Naive thymus-derived CD4-positive, alpha-beta T cell (primary cell): ENCODE measurements at regions of chr16 and their contacts with region 1.

Region 1: DNA sequence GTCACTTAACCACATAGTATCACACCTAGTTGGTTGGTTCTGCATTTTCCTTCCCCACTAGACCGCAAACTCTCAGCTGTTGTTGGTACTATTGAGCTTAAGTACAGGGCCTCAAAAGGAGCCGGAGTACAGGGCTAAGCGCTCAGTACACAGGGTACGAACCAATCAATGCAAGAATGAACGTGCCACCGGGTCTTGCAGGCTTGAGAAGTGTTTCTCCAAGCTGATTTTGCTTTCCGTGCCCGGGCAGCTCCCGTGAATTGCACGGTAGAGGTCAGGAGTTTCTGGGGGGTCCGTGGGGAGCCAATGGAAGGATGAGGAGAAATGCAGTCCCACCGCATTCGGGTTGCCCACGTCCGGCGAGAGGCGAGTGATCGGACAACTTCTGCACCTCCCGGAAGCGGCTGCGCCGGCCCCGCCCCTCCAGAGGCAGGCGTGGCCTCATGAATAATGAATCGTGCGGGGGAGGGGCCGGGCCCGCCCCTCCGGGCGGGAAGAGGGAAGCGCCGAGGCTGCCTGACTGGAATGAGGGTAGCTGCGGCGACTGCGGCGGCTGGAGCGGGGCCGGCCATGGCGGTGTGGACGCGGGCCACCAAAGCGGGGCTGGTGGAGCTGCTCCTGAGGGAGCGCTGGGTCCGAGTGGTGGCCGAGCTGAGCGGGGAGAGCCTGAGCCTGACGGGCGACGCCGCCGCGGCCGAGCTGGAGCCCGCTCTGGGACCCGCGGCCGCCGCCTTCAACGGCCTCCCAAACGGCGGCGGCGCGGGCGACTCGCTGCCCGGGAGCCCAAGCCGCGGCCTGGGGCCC is at the start of gene SNTB2:
- DNase-seq: peak; percentile 68 to 89 (median 78)
- ATAC-seq: peak; percentile 90
- H3K4me3 ChIP-seq: peak within 1 kb of the TSS; percentile 83
- H3K4me3 Mint-ChIP-seq: peak within 1 kb of the TSS; percentile 88 to 100 (median 99)
- H3K27ac ChIP-seq: peak within 1 kb of the TSS; percentile 77
- H3K27ac Mint-ChIP-seq: peak within 1 kb of the TSS; percentile 89 to 99 (median 96)
- H3K4me1 ChIP-seq: peaks cover 13 to 32% of the 10 kb centered on the region in 2 donors
- H3K4me1 Mint-ChIP-seq: peaks cover 23 to 46% (median 39%) of the 10 kb centered on the region in 7 donors
- H3K27me3 ChIP-seq: no peaks in the 10 kb centered on the region
- H3K27me3 Mint-ChIP-seq: no peaks in the 10 kb centered on the region
- total RNA-seq, gene SNTB2: 9.7 to 16.4 (median 12.1) TPM

Region 2: GRCh38 chr16:68538880-68539701 is 647.8 kb before region 1 on chr16 and contains the start of gene ZFP90:
- CTCF ChIA-PET with region 1: no interaction called
- POLR2A ChIA-PET with region 1: no interaction called
- intact Hi-C with region 1: loop called in 1 of 2 experiments (anchors 2 kb)
- DNase-seq: peak; percentile 82 to 91 (median 88)
- ATAC-seq: peak; percentile 94
- H3K4me3 ChIP-seq: peak within 1 kb of the TSS; percentile 66
- H3K4me3 Mint-ChIP-seq: peak within 1 kb of the TSS; percentile 86 to 99 (median 97)
- H3K27ac ChIP-seq: peak within 1 kb of the TSS; percentile 94
- H3K27ac Mint-ChIP-seq: peak within 1 kb of the TSS; percentile 97 to 100 (median 100)
- H3K4me1 ChIP-seq: peaks cover 13 to 14% of the 10 kb centered on the region in 2 donors
- H3K4me1 Mint-ChIP-seq: peaks cover 13 to 32% (median 24%) of the 10 kb centered on the region in 7 donors
- H3K27me3 ChIP-seq: no peaks in the 10 kb centered on the region
- H3K27me3 Mint-ChIP-seq: no peaks in the 10 kb centered on the region
- total RNA-seq, gene ZFP90: 25.7 to 49.4 (median 38.8) TPM

Region 3: GRCh38 chr16:68951991-68952877 is 234.6 kb before region 1 on chr16:
- CTCF ChIA-PET with region 1: no interaction called
- POLR2A ChIA-PET with region 1: no interaction called
- intact Hi-C with region 1: no loop called
- DNase-seq: no peak
- ATAC-seq: no peak
- H3K4me3 ChIP-seq: no peak overlapping the region
- H3K4me3 Mint-ChIP-seq: no peak overlapping the region
- H3K27ac ChIP-seq: no peak overlapping the region
- H3K27ac Mint-ChIP-seq: no peak overlapping the region
- H3K4me1 ChIP-seq: no peaks in the 10 kb centered on the region
- H3K4me1 Mint-ChIP-seq: peaks cover 0 to 2% (median 0%) of the 10 kb centered on the region in 7 donors
- H3K27me3 ChIP-seq: no peaks in the 10 kb centered on the region
- H3K27me3 Mint-ChIP-seq: no peaks in the 10 kb centered on the region

Region 4: GRCh38 chr16:69132424-69133252 is 54.2 kb before region 1 on chr16 and contains the starts of genes CHTF8 and UTP4:
- CTCF ChIA-PET with region 1: no interaction called
- POLR2A ChIA-PET with region 1: interaction called, 5 read pairs
- intact Hi-C with region 1: loop called (anchors 1 kb)
- DNase-seq: peak; percentile 81 to 91 (median 87)
- ATAC-seq: peak; percentile 95
- H3K4me3 ChIP-seq: peak within 1 kb of the TSS; percentile 80
- H3K4me3 Mint-ChIP-seq: peak within 1 kb of the TSS; percentile 91 to 97 (median 94)
- H3K27ac ChIP-seq: peak within 1 kb of the TSS; percentile 88
- H3K27ac Mint-ChIP-seq: peak within 1 kb of the TSS; percentile 85 to 97 (median 95)
- H3K4me1 ChIP-seq: peaks cover 12 to 23% of the 10 kb centered on the region in 2 donors
- H3K4me1 Mint-ChIP-seq: peaks cover 16 to 71% (median 61%) of the 10 kb centered on the region in 7 donors
- H3K27me3 ChIP-seq: no peaks in the 10 kb centered on the region
- H3K27me3 Mint-ChIP-seq: no peaks in the 10 kb centered on the region
- total RNA-seq, gene CHTF8: 53.3 to 142 (median 133) TPM
- total RNA-seq, gene UTP4: 31.9 to 56.5 (median 35.1) TPM

Region 5: DNA sequence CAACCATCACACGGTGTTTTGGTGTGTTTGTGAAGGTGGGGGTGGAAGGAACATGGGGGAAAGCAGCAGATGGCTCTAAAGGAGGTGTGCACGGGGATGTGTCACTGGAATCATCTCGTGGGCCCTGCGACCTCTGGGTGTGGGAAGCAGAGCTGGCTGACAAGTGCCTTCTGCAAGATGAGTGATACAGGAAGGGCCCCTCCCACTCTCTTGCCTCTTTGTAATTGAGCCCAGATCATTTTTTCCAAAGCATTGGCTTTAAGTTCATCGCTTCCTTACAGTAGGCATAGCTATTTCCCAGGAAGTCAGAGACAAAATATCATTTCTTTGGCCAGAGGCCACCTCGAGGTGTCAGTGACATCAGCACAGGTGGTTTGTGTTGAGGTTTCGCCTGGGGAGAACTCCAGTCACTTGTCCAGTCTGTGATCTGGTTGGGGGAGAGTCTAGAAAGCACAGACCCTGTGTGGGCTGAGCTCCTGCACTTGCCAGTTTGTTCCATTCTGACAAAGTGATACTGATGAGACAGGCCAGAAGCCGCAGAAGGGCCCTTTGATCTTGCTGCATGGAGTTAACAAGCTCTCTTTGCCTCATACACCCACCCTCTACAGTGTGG is 20.5 kb before region 1 on chr16:
- CTCF ChIA-PET with region 1: interaction called, 3 read pairs
- POLR2A ChIA-PET with region 1: interaction called, 8 read pairs
- intact Hi-C with region 1: loop called (anchors 1 kb)
- DNase-seq: peak in 7 of 9 donors; percentile 5 to 77 (median 25)
- ATAC-seq: peak; percentile 72
- H3K4me3 ChIP-seq: no peak overlapping the region
- H3K4me3 Mint-ChIP-seq: peak overlapping the region in 8 of 10 donors; percentile 1 to 63 (median 20)
- H3K27ac ChIP-seq: peak overlapping the region; percentile 11
- H3K27ac Mint-ChIP-seq: peak overlapping the region in 8 of 9 donors; percentile 19 to 87 (median 54)
- H3K4me1 ChIP-seq: peaks cover 8 to 14% of the 10 kb centered on the region in 2 donors
- H3K4me1 Mint-ChIP-seq: peaks cover 15 to 31% (median 22%) of the 10 kb centered on the region in 7 donors
- H3K27me3 ChIP-seq: no peaks in the 10 kb centered on the region
- H3K27me3 Mint-ChIP-seq: no peaks in the 10 kb centered on the region

Region 6: DNA sequence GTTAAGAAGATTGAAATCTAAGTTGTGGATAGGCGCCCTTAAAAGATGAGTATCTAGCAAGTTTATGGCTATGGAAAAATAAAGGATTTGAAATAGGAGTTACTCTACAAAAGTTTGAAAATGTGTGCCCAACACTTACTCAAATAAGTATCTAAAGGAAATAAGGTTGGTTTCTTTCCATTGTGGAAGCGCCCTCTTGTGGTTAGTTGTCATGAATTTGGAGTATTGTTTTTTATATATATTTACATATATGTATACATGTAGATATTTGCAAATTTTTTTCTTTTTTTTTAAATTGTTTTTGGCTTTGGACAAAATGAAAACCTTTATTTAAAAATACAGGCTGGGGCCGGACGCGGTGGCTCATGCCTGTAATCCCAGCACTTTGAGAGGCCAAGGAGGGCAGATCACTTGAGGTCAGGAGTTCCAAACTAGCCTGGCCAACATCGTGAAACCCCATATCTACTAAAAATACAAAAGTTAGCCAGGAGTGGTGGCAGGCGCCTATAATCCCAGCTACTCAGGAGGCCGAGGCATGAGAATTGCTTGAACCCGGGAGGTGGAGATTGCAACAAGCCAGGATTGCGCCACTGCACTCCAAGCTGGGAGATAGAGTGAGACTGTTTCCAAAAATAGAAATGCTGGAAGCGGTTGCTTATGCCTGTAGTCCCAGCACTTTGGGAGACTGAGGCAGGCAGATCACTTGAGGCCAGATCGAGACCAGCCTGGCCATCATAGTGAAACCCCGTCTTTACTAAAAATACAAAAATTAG is 100.3 kb after region 1 on chr16:
- CTCF ChIA-PET with region 1: interaction called, 3 read pairs
- POLR2A ChIA-PET with region 1: no interaction called
- intact Hi-C with region 1: loop called in 1 of 2 experiments (anchors 1 kb)
- DNase-seq: peak in 7 of 9 donors; percentile 38 to 73 (median 65)
- ATAC-seq: peak; percentile 63
- H3K4me3 ChIP-seq: no peak overlapping the region
- H3K4me3 Mint-ChIP-seq: no peak overlapping the region
- H3K27ac ChIP-seq: no peak overlapping the region
- H3K27ac Mint-ChIP-seq: no peak overlapping the region
- H3K4me1 ChIP-seq: no peaks in the 10 kb centered on the region
- H3K4me1 Mint-ChIP-seq: peaks cover 0 to 2% (median 0%) of the 10 kb centered on the region in 7 donors
- H3K27me3 ChIP-seq: no peaks in the 10 kb centered on the region
- H3K27me3 Mint-ChIP-seq: no peaks in the 10 kb centered on the region

Region 7: DNA sequence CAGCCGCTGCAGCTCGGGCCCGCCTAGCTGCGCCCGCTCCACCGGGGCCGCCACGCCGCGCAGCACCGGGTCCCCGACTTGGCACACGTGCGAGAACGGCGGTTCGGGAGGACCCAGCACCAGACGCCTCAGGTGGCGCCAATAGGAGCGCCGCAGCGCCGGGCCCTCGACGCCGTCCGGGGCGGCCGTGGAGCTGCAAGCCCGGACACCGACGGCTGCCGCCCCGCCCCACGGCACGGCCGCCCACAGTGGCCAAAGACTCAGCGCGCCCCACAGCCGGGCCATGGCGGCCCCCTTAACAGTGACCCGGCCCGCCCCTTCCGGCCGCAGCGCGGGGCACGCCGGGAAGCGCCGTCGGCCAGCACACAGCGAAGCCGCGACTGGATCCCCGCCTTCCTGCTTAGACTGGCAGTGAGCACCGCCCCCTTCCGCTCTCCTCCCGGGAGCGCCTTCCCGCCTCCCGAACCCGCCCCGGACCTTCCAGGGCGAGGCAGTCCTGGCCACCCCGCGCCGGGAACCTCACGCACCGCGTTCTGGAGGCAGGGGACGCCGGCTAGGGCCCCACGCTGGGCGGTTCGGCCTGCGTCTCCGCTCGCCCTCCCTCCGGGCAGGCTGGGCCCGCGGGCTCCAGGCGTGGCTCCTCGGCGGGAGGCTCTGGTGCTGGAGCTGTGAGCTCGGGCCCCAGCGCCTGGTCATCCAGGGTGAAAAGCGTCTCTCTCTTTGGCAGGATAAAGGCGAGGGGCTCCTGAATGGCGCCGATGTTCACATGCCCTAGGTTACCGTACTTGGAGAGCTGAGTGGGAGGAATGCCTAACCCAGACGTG is 143.7 kb after region 1 on chr16 and contains the start of gene PDF:
- CTCF ChIA-PET with region 1: no interaction called
- POLR2A ChIA-PET with region 1: interaction called, 4 read pairs
- intact Hi-C with region 1: loop called in 1 of 2 experiments (anchors 1 kb)
- DNase-seq: peak; percentile 61 to 91 (median 72)
- ATAC-seq: peak; percentile 97
- H3K4me3 ChIP-seq: peak within 1 kb of the TSS; percentile 64
- H3K4me3 Mint-ChIP-seq: peak within 1 kb of the TSS; percentile 69 to 87 (median 76)
- H3K27ac ChIP-seq: peak within 1 kb of the TSS; percentile 90
- H3K27ac Mint-ChIP-seq: peak within 1 kb of the TSS; percentile 36 to 80 (median 62)
- H3K4me1 ChIP-seq: peaks cover 13 to 37% of the 10 kb centered on the region in 2 donors
- H3K4me1 Mint-ChIP-seq: peaks cover 16 to 72% (median 54%) of the 10 kb centered on the region in 7 donors
- H3K27me3 ChIP-seq: no peaks in the 10 kb centered on the region
- H3K27me3 Mint-ChIP-seq: no peaks in the 10 kb centered on the region
- total RNA-seq, gene PDF: 4.6 to 11.8 (median 9.5) TPM

Region 8: DNA sequence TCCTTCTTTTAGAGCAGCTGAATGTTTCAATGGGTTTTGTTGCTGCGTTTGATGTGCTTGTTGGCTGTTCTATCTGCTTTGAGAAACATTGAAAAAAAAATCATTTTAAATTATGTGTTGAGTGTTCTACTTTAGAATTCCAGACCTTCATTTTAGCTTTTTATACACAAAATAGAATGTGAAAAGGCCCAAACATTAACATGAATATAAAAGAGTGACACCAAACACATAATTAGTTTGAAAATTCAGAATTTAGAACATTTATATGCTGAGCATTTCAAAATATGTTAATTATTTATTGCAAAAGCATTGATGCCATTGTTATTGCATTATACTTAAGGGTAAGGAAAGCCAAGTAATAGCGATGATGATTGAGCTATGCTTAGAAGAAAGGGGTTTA is 381.8 kb after region 1 on chr16:
- CTCF ChIA-PET with region 1: no interaction called
- POLR2A ChIA-PET with region 1: no interaction called
- intact Hi-C with region 1: no loop called
- DNase-seq: no peak
- ATAC-seq: no peak
- H3K4me3 ChIP-seq: no peak overlapping the region
- H3K4me3 Mint-ChIP-seq: peak overlapping the region in 5 of 10 donors; percentile 19 to 98 (median 40)
- H3K27ac ChIP-seq: no peak overlapping the region
- H3K27ac Mint-ChIP-seq: peak overlapping the region in 1 of 9 donors; percentile 28
- H3K4me1 ChIP-seq: peaks cover 11 to 30% of the 10 kb centered on the region in 2 donors
- H3K4me1 Mint-ChIP-seq: peaks cover 35 to 65% (median 45%) of the 10 kb centered on the region in 7 donors
- H3K27me3 ChIP-seq: no peaks in the 10 kb centered on the region
- H3K27me3 Mint-ChIP-seq: no peaks in the 10 kb centered on the region

Region 9: GRCh38 chr16:69761983-69762813 is 575.4 kb after region 1 on chr16 and contains the start of gene WWP2:
- CTCF ChIA-PET with region 1: no interaction called
- POLR2A ChIA-PET with region 1: no interaction called
- intact Hi-C with region 1: loop called in 1 of 2 experiments (anchors 5 kb)
- DNase-seq: peak; percentile 68 to 81 (median 77)
- ATAC-seq: peak; percentile 86
- H3K4me3 ChIP-seq: peak within 1 kb of the TSS; percentile 88
- H3K4me3 Mint-ChIP-seq: peak within 1 kb of the TSS; percentile 77 to 96 (median 94)
- H3K27ac ChIP-seq: peak within 1 kb of the TSS; percentile 92
- H3K27ac Mint-ChIP-seq: peak within 1 kb of the TSS; percentile 93 to 99 (median 98)
- H3K4me1 ChIP-seq: peaks cover 10 to 14% of the 10 kb centered on the region in 2 donors
- H3K4me1 Mint-ChIP-seq: peaks cover 16 to 47% (median 37%) of the 10 kb centered on the region in 7 donors
- H3K27me3 ChIP-seq: no peaks in the 10 kb centered on the region
- H3K27me3 Mint-ChIP-seq: peaks cover 0 to 5% (median 0%) of the 10 kb centered on the region in 5 donors
- total RNA-seq, gene WWP2: 58.4 to 81.3 (median 72.1) TPM